Endothelial cell of umbilical vein (primary cell): ENCODE measurements at regions of chr3 and their contacts with region 1.

Region 1: DNA sequence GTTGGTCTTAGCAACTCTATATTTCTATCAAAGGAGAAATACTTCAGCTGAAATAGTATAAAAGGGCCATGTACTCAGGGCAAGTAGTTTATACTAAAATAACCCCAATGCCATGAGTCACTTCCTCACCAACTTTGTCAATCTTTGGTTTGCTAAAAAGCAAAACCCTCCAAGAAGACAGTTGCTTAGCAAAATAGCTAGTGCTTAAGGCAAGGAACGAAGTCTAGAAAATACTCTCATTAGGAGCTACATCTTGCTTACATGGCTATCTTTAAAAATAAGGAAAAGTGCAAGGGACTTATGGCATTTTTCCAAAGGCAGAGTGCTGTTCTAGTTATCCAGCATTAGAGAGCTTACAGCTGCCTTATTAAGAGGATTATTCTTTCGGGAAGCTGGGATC is 28.4 kb downstream of the P3H2 start:
- DNase-seq: peak; percentile 78
- H3K4me3 ChIP-seq: peak overlapping the region in 1 of 3 experiments; percentile 23
- H3K27ac ChIP-seq: no peak overlapping the region
- H3K4me1 ChIP-seq: peaks cover 19% of the 10 kb centered on the region
- H3K27me3 ChIP-seq: no peaks in the 10 kb centered on the region
- CTCF ChIP-seq: no peak
- POLR2A ChIP-seq: no peak

Region 2: DNA sequence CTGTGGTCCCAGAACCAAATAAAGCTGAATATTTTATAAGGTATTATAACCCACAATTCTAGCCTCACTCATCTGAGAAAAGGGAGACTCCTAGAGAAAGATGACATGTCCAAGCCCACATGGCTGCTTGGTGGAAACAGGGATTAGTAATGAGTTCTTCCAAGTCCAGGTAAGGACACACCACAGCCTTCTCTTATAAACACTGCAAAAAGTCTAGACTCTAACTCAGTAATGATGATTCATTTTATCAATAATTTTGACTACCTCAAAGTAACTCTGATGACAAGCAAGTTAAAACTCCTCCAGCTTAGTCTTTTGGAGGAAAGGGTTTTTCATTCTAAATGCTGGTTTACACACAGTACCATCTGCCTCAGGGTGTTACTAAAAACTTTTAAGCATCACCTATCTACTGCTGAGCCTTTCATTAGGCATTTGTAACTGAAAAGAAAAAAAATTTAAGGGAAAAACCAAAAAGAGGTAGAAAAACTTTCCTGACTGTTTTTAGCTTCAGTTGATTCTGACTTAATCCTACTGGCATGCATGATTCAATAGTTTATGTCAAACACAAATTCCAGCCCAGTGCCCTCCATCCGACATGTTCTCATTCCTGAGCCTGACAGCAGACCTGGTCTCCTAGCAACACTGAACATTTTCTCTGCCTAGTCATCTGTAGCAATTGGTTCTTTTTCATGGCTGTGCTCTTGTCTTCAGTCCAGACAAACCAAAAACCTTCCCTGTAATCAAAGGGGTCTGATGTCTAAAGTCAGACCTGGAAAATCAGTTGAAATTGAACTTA is 15.5 kb before region 1 on chr3:
- CTCF ChIA-PET with region 1: no interaction called
- POLR2A ChIA-PET with region 1: interaction called, 3 read pairs
- dilution Hi-C with region 1: no loop called
- intact Hi-C with region 1: loop called (anchors 1 kb)
- DNase-seq: peak; percentile 86
- H3K4me3 ChIP-seq: no peak overlapping the region
- H3K27ac ChIP-seq: peak overlapping the region; percentile 67
- H3K4me1 ChIP-seq: peaks cover 21% of the 10 kb centered on the region
- H3K27me3 ChIP-seq: no peaks in the 10 kb centered on the region
- CTCF ChIP-seq: no peak
- POLR2A ChIP-seq: no peak

Region 3: DNA sequence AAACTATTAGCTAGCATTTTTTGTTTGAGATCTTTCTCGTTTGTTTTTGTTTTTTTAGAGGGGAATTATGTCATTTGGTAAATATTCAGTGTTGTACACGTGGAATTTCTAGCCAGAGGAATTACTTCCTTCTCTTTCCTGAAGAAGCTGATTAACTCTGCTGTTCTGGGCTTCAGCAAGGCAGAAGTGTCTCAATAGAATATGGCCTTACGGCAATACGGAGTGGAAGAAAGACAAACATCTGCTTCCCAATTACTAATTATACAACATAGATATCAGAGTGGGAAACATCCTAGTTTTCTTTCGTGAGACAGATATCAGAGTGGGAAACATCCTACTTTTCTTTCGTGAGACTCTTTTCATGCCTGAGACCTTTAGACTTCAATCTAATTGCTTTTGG is 16.6 kb after region 1 on chr3:
- CTCF ChIA-PET with region 1: interaction called, 7 read pairs
- POLR2A ChIA-PET with region 1: no interaction called
- dilution Hi-C with region 1: no loop called
- intact Hi-C with region 1: loop called (anchors 1 kb)
- DNase-seq: peak; percentile 51
- H3K4me3 ChIP-seq: peak overlapping the region in 1 of 3 experiments; percentile 11
- H3K27ac ChIP-seq: peak overlapping the region; percentile 51
- H3K4me1 ChIP-seq: peaks cover 11% of the 10 kb centered on the region
- H3K27me3 ChIP-seq: no peaks in the 10 kb centered on the region
- CTCF ChIP-seq: no peak
- POLR2A ChIP-seq: no peak

Region 4: DNA sequence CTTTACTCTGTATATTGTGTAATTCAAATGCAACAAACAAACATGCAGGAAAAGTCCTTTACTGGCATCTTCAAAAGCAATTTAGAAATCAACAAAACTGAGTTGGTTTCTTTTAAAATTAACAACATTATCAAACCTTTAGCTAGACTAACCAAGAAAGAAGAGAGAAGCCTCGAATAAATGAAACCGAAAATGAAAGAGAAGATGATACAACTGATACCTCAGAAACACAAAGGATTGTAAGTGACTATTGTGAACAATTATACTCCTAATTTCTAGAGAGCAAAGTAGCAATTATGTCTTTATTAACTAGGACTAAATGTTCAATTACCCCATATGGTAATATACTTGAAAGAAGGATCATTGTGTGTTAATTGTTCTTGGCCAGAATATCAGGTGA is 77.6 kb after region 1 on chr3:
- CTCF ChIA-PET with region 1: no interaction called
- POLR2A ChIA-PET with region 1: no interaction called
- dilution Hi-C with region 1: no loop called
- intact Hi-C with region 1: no loop called
- DNase-seq: no peak
- H3K4me3 ChIP-seq: no peak overlapping the region
- H3K27ac ChIP-seq: no peak overlapping the region
- H3K4me1 ChIP-seq: no peaks in the 10 kb centered on the region
- H3K27me3 ChIP-seq: peaks cover 3 to 8% of the 10 kb centered on the region in 2 experiments
- CTCF ChIP-seq: no peak
- POLR2A ChIP-seq: no peak